Activated CD8-positive, alpha-beta T cell treated with anti-CD3 and anti-CD28 coated beads for 36 hours (primary cell): ENCODE measurements at regions of chr19 and their contacts with region 1.

Region 1: GRCh38 chr19:38769635-38770211 is 3.6 kb downstream of the LGALS7 start:
- DNase-seq: peak; percentile 90
- ATAC-seq: peak; percentile 85
- H3K4me3 Mint-ChIP-seq: peak overlapping the region; percentile 32
- H3K27ac Mint-ChIP-seq: no peak overlapping the region
- H3K4me1 Mint-ChIP-seq: peaks cover 5% of the 10 kb centered on the region
- H3K27me3 Mint-ChIP-seq: no peaks in the 10 kb centered on the region
- CTCF ChIP-seq: peak; percentile 78

Region 2: DNA sequence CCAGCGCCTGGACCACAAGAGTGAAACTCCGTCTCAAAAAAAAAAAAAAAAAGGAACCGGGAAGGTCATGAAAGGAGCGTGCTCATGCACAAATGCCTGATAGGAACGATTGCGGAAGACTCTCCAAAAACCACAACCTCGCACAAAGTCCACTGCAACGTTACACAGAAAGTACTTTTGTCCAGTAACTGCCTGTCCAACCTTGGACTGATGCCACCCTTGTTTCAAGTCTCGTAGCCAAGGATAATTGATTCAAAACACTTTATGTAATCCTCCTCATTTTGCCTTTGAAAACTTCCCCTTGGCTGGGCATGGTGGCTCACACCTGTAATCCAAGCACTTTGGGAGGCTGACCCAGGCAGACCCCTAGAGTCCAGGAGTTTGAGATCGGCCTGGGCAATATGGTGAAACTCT is 10.1 kb before region 1 on chr19:
- CTCF ChIA-PET with region 1: interaction called, 16 read pairs
- POLR2A ChIA-PET with region 1: no interaction called
- intact Hi-C with region 1: no loop called
- DNase-seq: no peak
- ATAC-seq: no peak
- H3K4me3 Mint-ChIP-seq: no peak overlapping the region
- H3K27ac Mint-ChIP-seq: no peak overlapping the region
- H3K4me1 Mint-ChIP-seq: no peaks in the 10 kb centered on the region
- H3K27me3 Mint-ChIP-seq: no peaks in the 10 kb centered on the region
- CTCF ChIP-seq: no peak

Region 3: GRCh38 chr19:38781058-38781457 is 11.3 kb after region 1 on chr19:
- CTCF ChIA-PET with region 1: no interaction called
- POLR2A ChIA-PET with region 1: no interaction called
- intact Hi-C with region 1: no loop called
- DNase-seq: no peak
- ATAC-seq: no peak
- H3K4me3 Mint-ChIP-seq: no peak overlapping the region
- H3K27ac Mint-ChIP-seq: no peak overlapping the region
- H3K4me1 Mint-ChIP-seq: no peaks in the 10 kb centered on the region
- H3K27me3 Mint-ChIP-seq: no peaks in the 10 kb centered on the region
- CTCF ChIP-seq: no peak